Mammary epithelial cell (primary cell): ENCODE measurements at regions of chr17 and their contacts with region 1.

Region 1: DNA sequence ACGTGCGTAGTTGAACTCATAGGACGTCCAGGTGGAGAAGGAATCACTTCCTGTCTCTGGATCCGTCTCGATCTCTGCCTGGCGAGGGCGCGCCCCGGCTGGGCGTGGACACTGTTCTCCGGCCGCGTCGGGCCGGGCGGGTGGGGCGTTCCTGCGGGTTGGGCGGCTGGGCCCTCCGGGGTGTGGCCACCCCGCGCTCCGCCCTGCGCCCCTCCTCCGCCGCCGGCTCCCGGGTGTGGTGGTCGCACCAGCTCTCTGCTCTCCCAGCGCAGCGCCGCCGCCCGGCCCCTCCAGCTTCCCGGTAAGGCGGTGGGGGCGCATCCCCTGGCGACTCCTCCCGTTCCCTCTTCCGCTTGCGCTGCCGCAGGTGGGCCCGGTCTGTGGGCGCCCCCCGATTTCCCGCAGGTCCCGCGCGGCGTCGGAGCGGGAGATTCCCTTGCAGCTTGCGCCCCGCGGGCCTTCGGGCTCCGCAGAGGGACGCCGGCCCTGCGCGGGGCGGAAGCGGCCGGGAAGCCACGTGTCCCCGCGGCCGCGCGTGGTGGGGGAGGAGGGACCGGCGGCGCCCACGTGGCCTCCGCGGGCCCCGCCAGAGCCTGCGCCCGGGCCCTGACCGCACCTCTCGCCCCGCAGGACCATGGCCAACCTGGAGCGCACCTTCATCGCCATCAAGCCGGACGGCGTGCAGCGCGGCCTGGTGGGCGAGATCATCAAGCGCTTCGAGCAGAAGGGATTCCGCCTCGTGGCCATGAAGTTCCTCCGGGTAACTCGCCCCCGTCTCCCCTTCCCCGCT is at the start of gene NME2:
- DNase-seq: peak; percentile 88
- H3K4me3 ChIP-seq: peak within 1 kb of the TSS; percentile 75 to 99 (median 93)
- H3K27ac ChIP-seq: peak within 1 kb of the TSS; percentile 72
- H3K4me1 ChIP-seq: peaks cover 18% of the 10 kb centered on the region
- H3K27me3 ChIP-seq: no peaks in the 10 kb centered on the region
- CTCF ChIP-seq: no peak
- total RNA-seq, gene NME2: 469 to 832 TPM

Region 2: GRCh38 chr17:51016099-51016498 is 150.3 kb before region 1 on chr17:
- CTCF ChIA-PET with region 1: no interaction called
- dilution Hi-C with region 1: no loop called
- in situ Hi-C with region 1: no loop called
- intact Hi-C with region 1: no loop called
- DNase-seq: no peak
- H3K4me3 ChIP-seq: no peak overlapping the region
- H3K27ac ChIP-seq: no peak overlapping the region
- H3K4me1 ChIP-seq: no peaks in the 10 kb centered on the region
- H3K27me3 ChIP-seq: no peaks in the 10 kb centered on the region
- CTCF ChIP-seq: no peak

Region 3: GRCh38 chr17:51046514-51047384 is 119.6 kb before region 1 on chr17:
- CTCF ChIA-PET with region 1: no interaction called
- dilution Hi-C with region 1: loop called (anchors 10 kb)
- in situ Hi-C with region 1: no loop called
- intact Hi-C with region 1: no loop called
- DNase-seq: peak; percentile 82
- H3K4me3 ChIP-seq: peak overlapping the region in 2 of 3 experiments; percentile 22 to 28
- H3K27ac ChIP-seq: peak overlapping the region; percentile 32
- H3K4me1 ChIP-seq: peaks cover 28% of the 10 kb centered on the region
- H3K27me3 ChIP-seq: no peaks in the 10 kb centered on the region
- CTCF ChIP-seq: no peak

Region 4: GRCh38 chr17:51107778-51108177 is 58.6 kb before region 1 on chr17:
- CTCF ChIA-PET with region 1: no interaction called
- dilution Hi-C with region 1: loop called (anchors 5 kb)
- in situ Hi-C with region 1: no loop called
- intact Hi-C with region 1: no loop called
- DNase-seq: no peak
- H3K4me3 ChIP-seq: no peak overlapping the region
- H3K27ac ChIP-seq: no peak overlapping the region
- H3K4me1 ChIP-seq: no peaks in the 10 kb centered on the region
- H3K27me3 ChIP-seq: no peaks in the 10 kb centered on the region
- CTCF ChIP-seq: no peak

Region 5: GRCh38 chr17:51120739-51121617 is 45.4 kb before region 1 on chr17 and contains the start of gene SPAG9:
- CTCF ChIA-PET with region 1: no interaction called
- dilution Hi-C with region 1: no loop called
- in situ Hi-C with region 1: no loop called
- intact Hi-C with region 1: loop called (anchors 5 kb)
- DNase-seq: peak; percentile 97
- H3K4me3 ChIP-seq: peak within 1 kb of the TSS; percentile 66 to 100 (median 67)
- H3K27ac ChIP-seq: peak within 1 kb of the TSS; percentile 100
- H3K4me1 ChIP-seq: peaks cover 30% of the 10 kb centered on the region
- H3K27me3 ChIP-seq: no peaks in the 10 kb centered on the region
- CTCF ChIP-seq: no peak
- total RNA-seq, gene SPAG9: 80.4 to 95.3 TPM

Region 6: DNA sequence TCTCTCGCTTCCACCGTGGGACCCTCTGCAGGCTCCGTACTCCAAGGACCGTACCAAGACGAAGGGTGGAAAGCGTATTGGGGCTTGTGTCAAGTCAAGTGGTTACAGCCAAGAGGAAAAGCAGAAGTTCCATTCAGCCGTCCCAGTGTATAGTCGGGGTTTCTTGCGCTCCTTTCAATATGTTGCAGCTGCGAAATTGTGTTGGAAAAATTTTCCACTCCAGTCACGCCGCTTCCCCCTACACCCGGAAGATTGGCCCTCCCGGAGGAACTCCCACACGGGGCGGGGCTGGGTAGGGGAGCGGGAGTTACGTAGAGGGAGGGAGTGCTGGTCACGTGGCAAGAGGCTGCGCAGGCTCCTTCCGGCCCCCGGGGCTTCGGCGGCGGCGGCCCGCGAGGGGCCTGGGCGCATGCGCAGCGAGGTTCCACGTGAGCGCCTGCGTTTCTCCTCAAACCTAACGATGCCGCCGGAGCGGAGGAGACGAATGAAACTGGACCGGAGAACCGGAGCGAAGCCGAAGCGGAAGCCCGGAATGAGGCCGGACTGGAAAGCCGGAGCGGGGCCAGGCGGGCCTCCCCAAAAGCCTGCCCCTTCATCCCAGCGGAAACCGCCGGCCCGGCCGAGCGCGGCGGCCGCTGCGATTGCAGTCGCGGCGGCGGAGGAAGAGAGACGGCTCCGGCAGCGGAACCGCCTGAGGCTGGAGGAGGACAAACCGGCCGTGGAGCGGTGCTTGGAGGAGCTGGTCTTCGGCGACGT is 93.9 kb after region 1 on chr17 and contains the start of gene UTP18:
- CTCF ChIA-PET with region 1: no interaction called
- dilution Hi-C with region 1: no loop called
- in situ Hi-C with region 1: no loop called
- intact Hi-C with region 1: loop called (anchors 1 kb)
- DNase-seq: peak; percentile 96
- H3K4me3 ChIP-seq: peak within 1 kb of the TSS; percentile 71 to 91 (median 78)
- H3K27ac ChIP-seq: peak within 1 kb of the TSS; percentile 91
- H3K4me1 ChIP-seq: peaks cover 37% of the 10 kb centered on the region
- H3K27me3 ChIP-seq: no peaks in the 10 kb centered on the region
- CTCF ChIP-seq: no peak
- total RNA-seq, gene UTP18: 25.0 to 37.3 TPM